GM13976 (cell line): ENCODE measurements at regions of chr15 and their contacts with region 1.

Region 1: DNA sequence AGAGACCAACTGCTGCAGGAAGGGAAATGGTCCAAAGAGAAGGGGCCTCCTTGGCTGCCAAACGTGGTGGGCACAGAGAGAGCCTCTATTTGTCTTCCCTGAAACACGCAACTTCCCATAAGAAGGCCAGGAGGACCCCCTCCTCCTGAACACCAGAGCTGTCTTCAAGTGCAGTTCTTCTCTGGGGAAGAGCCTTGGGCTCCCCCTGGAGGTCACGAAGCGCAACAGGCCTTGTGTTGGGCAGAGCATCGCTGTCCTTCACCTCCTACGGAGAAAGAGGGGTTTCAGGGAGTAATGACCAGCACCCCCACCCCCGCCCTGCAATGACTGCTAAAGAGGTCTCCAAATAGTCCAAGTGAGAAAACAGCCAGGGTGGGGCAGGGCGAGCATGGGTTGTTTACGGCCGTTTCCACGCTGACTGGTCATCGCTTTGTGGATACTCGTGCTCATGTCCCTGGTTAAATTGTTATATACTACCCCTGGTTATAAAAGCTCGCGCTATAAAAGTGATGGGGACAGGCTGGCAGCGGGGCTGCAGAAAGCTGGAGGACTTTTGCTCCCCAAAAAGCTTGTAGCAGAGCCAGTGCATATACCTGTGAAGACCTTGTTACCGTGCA is 397.5 kb upstream of the ATP10A start:
- DNase-seq: peak; percentile 22
- CTCF ChIP-seq: no peak

Region 2: DNA sequence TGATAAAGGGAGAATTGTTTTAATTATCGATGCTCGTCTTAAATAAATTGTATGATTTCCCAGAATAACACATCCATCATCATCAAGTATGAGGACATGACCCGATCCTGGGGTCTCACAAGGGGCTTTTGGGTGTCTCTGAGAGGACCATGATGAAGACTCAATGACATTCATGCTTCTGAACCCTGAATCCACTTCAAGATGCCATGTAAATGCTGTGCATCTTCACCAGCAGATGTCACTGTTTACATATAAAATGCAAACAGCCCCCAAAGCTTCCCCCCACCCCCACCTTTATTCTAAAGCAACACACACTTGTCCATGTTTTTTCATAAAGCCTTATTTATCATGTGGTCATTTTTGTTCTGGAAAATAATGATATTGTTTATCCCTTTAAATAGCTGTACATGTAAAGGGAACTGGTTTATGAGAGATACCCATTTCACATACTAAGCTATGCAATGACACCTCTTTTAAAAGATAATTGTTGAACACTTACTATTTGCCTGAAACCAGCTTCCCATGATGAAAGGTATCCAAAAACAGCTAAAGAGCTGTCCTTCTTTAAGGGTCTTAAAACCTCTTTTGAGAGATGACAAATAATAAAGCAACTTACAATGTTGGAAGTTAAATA is 752.1 kb before region 1 on chr15:
- in situ Hi-C with region 1: loop called (anchors 25 kb)
- DNase-seq: peak; percentile 32
- CTCF ChIP-seq: peak; percentile 28

Region 3: DNA sequence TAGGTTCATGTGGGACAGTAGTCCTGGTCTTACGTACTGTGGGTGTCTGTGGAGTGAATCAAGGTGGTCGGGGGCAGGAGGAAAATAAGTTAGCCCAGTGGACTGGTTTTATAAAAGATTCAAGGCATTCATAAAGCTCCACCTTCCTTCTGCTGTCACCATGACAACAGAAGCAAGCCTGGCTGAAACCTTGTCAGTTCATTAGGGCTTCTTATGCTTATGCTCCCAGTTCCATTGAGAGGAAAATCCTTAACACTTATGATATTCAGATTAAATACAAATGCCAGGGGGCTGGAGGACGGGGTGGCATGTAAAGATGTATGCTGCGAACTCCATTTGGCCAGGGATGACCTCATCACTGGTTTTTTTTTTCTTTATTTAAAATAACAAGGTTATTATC is 114.4 kb before region 1 on chr15:
- in situ Hi-C with region 1: no loop called
- DNase-seq: no peak
- CTCF ChIP-seq: no peak